SK-MEL-5 (cell line): ENCODE measurements at regions of chr10 and their contacts with region 1.

Region 1: DNA sequence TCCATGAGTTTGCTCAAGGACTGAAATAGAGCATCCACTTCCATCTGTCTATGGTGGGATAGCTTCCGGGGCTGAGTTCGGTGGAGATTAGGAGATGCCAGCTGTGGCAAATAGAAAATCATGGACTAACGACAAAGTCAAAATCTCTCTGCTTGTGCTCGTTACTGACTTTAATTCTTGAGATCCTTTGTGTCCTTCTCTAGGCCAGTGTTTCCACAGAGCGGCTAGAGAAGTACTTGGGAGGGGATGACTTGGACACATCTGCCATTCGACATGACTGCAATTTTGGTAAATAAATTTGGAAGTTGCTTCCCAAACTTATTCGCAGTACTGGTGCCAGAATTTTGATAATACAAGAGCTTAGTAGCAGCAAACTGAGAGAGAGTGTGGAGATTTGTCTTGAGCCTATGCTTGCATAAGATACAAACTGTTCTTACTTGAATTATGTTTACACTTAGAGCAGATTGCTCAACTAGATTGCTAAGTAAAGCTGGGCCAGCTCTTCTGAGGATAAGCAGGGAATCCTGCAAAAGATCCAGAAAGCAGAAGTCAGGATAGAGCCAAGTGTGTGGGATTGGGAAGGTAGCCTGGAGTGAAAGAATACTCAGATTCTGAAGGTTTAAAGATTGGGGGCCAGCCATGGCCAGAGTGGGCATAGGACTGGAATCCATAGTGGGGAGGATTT is 27.6 kb downstream of the ABCC2 start:
- DNase-seq: no peak

Region 2: GRCh38 chr10:99854860-99855259 is 44.8 kb after region 1 on chr10:
- in situ Hi-C with region 1: loop called (anchors 10 kb)
- DNase-seq: peak; percentile 53

Region 3: DNA sequence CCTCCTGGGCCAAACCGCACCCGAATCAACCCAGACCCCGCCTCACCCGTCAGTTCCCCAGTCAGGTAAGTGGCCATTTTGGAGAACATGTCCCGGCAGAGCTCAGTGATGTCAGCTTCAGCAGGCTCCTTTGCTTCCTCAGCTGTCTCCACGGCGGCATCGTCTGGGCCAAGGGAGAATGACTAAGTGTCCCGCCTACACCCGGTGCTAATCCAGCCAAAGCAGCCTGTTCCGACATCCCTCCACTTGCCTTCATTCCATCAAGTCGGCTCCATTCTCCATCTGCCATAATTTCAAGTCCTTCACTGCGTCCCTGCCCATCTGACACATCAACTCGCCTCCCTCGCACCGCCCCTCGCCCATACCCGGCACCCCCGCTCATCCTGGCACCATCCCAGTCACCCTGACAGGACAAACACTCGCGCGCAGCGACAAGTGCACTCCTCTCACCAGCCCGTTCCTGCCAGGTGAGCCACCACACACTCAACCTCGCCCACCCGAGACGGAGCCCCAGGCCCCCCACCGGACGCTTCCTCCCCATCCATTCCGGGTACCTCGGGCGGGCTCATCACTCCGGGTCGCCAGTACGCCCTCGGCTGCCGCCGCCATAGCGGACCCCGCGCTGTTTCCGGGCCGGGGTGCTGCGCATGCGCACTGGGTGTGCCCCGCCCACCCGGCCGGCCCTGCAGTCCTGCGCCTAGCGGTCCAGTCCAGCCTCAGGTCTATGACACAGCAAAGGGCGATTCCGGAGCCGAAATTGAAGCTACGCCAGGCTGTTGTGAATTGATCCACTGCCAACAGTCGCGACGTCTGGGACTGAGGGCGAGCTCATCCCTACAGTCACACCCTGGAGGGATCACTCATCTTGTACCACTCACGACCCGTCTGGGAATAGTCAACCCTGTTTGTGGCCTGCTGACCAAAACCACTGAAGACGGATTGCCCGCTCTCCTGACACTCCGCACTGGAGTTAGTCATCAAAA is 476.3 kb after region 1 on chr10 and contains the start of gene BLOC1S2:
- in situ Hi-C with region 1: no loop called
- DNase-seq: peak; percentile 76
- total RNA-seq, gene BLOC1S2: 48.6 and 55.5 TPM in 2 replicates